ENCODE measurements at regions of chr11 and their contacts with region 1.

Region 1: GRCh38 chr11:9573052-9573774 is at the start of gene WEE1:
- DNase-seq: peak; percentile 99
- ATAC-seq: peak; percentile 93
- H3K4me3 Mint-ChIP-seq: peak within 1 kb of the TSS; percentile 89
- H3K27ac Mint-ChIP-seq: peak within 1 kb of the TSS; percentile 87
- H3K4me1 Mint-ChIP-seq: peaks cover 34% of the 10 kb centered on the region
- H3K27me3 Mint-ChIP-seq: peaks cover 8% of the 10 kb centered on the region
- total RNA-seq, gene WEE1: 76.8 to 83.3 TPM

Region 2: GRCh38 chr11:9302448-9302847 is 270.8 kb before region 1 on chr11:
- CTCF ChIA-PET with region 1: no interaction called
- DNase-seq: no peak
- ATAC-seq: no peak
- H3K4me3 Mint-ChIP-seq: no peak overlapping the region
- H3K27ac Mint-ChIP-seq: no peak overlapping the region
- H3K4me1 Mint-ChIP-seq: peaks cover 4% of the 10 kb centered on the region
- H3K27me3 Mint-ChIP-seq: no peaks in the 10 kb centered on the region

Region 3: DNA sequence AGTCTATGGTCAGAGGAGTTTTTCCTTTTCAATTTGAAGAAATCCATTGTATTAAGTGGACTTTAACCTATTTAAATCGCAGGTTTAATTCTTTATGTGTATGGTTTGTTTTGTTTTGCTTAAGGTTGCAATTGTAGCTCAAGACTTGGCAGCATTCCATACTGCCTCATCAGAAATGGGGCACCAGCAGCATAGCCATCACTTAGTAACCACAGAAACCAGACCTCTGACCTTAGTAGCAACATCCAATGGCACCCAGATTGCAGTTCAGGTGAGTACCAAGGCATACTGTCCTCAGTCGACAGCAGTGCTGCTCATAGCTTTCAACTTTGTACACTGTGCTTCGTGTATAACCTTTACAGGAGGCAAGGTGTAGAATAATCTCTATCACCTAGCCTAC is 48.1 kb before region 1 on chr11:
- CTCF ChIA-PET with region 1: no interaction called
- DNase-seq: no peak
- ATAC-seq: no peak
- H3K4me3 Mint-ChIP-seq: no peak overlapping the region
- H3K27ac Mint-ChIP-seq: no peak overlapping the region
- H3K4me1 Mint-ChIP-seq: no peaks in the 10 kb centered on the region
- H3K27me3 Mint-ChIP-seq: no peaks in the 10 kb centered on the region

Region 4: DNA sequence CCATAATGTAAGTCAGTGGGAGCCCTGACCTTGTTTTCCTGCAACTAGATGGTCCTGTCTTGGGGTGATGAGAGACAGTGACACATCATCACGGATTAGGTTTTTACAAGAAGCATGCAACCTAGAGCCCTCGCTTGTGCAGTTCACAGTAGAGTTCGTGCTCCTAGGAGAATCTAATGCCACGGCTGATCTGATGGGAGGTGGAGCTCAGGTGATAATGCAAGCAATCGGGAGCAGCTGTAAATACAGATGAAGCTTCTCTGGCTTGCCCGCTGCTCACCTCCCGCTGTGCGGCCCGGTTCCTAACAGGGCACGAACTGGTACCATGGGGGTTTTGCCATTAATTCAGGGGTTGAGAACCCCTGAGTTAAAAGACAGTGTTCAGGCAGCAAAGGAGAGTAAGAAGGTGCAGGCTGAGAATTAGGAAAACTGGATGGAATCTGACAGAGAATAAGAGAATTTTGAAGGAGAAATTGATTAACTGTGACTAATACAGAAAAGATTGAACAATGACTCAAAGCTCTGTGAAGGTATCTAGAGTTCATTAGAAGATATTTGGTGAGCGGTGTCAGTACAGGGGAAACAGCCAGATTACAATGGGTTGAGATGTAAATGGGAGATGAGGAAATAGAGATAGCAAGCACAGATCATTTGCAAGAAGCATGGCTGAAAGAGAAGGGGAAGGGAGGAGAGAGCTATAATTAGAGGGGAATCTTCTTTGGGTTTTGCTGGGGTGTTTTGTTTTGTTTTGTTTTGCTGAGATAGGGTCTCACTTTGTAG is 21.2 kb after region 1 on chr11:
- CTCF ChIA-PET with region 1: interaction called, 18 read pairs
- DNase-seq: peak; percentile 26
- ATAC-seq: no peak
- H3K4me3 Mint-ChIP-seq: no peak overlapping the region
- H3K27ac Mint-ChIP-seq: no peak overlapping the region
- H3K4me1 Mint-ChIP-seq: no peaks in the 10 kb centered on the region
- H3K27me3 Mint-ChIP-seq: peaks cover 6% of the 10 kb centered on the region

Region 5: DNA sequence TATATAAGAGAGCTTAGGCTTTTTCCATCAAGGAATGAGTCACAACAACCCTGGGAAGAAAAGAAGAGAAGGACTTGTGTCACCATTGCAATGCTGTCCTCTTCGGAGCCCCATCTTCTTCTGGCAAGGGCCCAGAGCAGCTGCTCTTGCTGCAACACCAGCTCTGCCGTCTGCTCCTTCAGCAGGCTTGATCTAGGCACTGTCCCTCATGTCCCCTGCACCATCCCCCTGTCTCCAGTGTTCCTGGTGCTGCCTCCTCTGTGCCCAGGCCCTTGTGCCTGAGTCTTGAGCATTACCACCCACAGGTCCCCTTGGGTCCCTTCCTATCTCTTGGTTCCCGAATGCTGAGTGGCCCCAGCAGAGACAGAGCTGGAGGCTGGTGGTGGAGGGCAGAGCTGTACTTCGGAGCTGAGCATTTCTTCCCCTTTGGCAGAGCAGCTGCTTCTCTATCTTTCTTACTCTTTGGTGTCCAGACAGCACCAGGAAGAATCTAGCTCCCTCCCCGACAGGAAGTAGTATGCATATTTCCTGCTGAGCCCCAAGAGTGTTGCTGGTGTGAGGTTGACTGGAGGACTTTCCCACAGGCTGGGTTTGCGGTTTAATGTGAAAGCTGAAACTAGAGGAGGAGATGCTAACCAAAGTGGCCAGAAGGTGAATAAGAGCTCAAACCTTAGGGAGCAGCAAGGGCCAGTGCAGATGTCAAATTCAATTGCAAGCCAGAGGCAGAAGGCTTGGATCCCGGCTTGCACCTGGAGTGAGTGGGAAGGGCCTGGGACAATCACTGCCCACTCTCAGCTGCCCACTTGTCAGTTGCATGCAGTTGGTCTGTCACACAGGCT is 28.0 kb after region 1 on chr11:
- CTCF ChIA-PET with region 1: interaction called, 10 read pairs
- DNase-seq: peak; percentile 93
- ATAC-seq: peak; percentile 83
- H3K4me3 Mint-ChIP-seq: peak overlapping the region; percentile 66
- H3K27ac Mint-ChIP-seq: peak overlapping the region; percentile 85
- H3K4me1 Mint-ChIP-seq: peaks cover 32% of the 10 kb centered on the region
- H3K27me3 Mint-ChIP-seq: peaks cover 18% of the 10 kb centered on the region

Region 6: GRCh38 chr11:9748361-9748970 is 175.3 kb after region 1 on chr11:
- CTCF ChIA-PET with region 1: interaction called, 10 read pairs
- DNase-seq: peak; percentile 87
- ATAC-seq: peak; percentile 95
- H3K4me3 Mint-ChIP-seq: no peak overlapping the region
- H3K27ac Mint-ChIP-seq: no peak overlapping the region
- H3K4me1 Mint-ChIP-seq: peaks cover 33% of the 10 kb centered on the region
- H3K27me3 Mint-ChIP-seq: no peaks in the 10 kb centered on the region

Measured in activated CD8-positive, alpha-beta memory T cell treated with anti-CD3 and anti-CD28 coated beads, Interleukin-2, amount 10 ng/mL, durations not matched to agents 7 days and 5 days (primary cell).